ENCODE measurements at regions of chr6 and their contacts with region 1.

Region 1: DNA sequence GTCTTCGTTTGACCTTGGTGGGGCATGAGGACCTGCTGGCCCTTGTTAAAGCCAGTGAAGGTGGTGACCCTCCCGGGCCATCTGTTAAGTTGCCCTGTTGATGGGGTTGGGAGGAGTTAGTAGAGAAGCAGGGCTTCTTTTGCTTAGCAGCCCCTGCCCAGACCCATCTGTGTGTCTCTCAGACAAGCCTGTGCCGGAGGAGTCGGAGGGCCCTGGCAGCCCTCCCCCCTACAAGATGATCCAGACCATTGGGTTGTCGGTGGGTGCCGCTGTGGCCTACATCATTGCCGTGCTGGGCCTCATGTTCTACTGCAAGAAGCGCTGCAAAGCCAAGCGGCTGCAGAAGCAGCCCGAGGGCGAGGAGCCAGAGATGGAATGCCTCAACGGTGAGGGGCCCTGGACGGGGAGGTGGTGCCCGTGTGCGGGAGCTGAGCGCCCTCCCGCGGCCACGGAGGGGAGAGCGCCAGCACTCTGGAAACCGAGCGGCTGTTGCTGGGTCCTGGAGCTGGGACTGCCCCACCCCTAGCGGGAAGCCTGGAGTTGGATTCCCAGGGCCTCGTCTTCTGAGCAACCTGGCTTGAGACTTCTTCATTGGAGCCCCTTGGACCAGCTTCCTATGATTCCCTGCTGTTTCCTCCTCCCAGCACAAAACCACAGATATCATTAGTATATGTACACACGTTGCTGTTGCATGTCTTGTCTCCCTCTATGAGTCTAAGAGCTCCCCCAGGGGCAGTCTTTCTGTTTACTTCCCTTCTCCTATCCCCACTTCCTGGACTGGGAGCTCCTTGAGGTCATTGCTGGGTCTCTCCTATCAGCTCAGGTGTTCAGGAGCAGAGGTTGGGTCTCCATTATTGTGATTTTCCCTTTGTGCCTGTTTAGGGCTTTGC is 27.6 kb upstream of the SRF start:
- DNase-seq: peak; percentile 29 to 93
- H3K4me3 ChIP-seq: no peak overlapping the region
- H3K27ac ChIP-seq: peak overlapping the region in 1 of 2 donors; percentile 9
- H3K4me1 ChIP-seq: peaks cover 0 to 3% of the 10 kb centered on the region in 2 donors
- H3K27me3 ChIP-seq: no peaks in the 10 kb centered on the region
- CTCF ChIP-seq: peak; percentile 94 to 97 (median 95)

Region 2: DNA sequence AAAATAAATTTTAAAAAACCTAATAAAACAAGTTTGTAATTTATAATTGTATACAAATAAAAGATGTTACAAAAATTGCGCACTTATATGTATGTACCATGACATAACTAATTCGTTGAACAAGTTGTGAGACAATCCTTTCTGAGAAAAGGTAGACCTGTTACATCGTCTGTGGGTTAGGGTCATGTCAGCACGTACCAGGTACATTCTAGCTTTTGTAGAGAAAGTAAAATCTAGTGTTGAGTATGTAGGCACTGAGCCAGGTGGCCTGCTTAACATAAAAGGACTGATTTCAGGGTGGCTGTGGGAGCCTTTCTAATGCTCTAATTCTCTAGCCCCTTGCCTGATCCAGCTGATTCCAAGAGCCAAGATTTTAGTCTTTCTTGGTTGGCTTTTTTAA is 253.7 kb before region 1 on chr6:
- intact Hi-C with region 1: no loop called
- DNase-seq: no peak
- H3K4me3 ChIP-seq: peak overlapping the region; percentile 86 to 94
- H3K27ac ChIP-seq: peak overlapping the region; percentile 84 to 91
- H3K4me1 ChIP-seq: peaks cover 0 to 5% of the 10 kb centered on the region in 2 donors
- H3K27me3 ChIP-seq: no peaks in the 10 kb centered on the region
- CTCF ChIP-seq: no peak

Region 3: GRCh38 chr6:42928986-42929820 is 214.3 kb before region 1 on chr6 and contains the start of gene CNPY3:
- intact Hi-C with region 1: no loop called
- DNase-seq: peak; percentile 86 to 97
- H3K4me3 ChIP-seq: peak within 1 kb of the TSS; percentile 69 to 79
- H3K27ac ChIP-seq: peak within 1 kb of the TSS; percentile 81 to 87
- H3K4me1 ChIP-seq: peaks cover 0 to 12% of the 10 kb centered on the region in 2 donors
- H3K27me3 ChIP-seq: no peaks in the 10 kb centered on the region
- CTCF ChIP-seq: no peak
- total RNA-seq, gene CNPY3: 49.6 TPM

Region 4: GRCh38 chr6:42958125-42958524 is 185.4 kb before region 1 on chr6:
- intact Hi-C with region 1: no loop called
- DNase-seq: no peak
- H3K4me3 ChIP-seq: no peak overlapping the region
- H3K27ac ChIP-seq: no peak overlapping the region
- H3K4me1 ChIP-seq: peaks cover 0 to 7% of the 10 kb centered on the region in 2 donors
- H3K27me3 ChIP-seq: no peaks in the 10 kb centered on the region
- CTCF ChIP-seq: no peak

Region 5: DNA sequence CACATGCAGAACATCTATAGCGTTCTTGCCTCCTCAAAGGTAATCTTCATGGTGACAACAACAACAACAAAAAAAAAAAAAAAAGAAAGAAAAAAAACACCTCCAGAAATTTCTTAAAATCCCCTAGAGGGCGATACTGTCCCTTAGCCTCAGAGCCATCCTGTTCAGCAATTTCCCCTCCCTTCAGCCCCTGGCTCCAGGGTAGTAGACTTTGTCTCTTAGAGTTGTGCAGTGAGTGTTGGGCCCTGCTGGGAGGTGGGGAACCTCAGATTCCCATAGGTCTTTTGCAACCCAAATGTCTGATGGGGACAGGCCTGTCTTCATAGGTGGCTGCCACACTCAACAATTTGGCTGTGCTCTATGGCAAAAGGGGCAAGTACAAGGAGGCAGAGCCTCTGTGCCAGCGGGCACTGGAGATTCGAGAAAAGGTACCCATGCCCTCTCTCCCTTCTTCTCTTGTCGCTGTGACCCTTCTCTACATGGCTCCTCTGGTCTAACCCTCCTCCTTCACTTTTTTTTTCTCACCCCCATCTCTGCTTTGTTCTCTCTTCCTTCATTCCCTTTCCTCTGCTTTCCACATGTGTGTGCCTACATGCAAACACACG is 73.3 kb before region 1 on chr6:
- intact Hi-C with region 1: loop called (anchors 1 kb)
- DNase-seq: no peak
- H3K4me3 ChIP-seq: no peak overlapping the region
- H3K27ac ChIP-seq: no peak overlapping the region
- H3K4me1 ChIP-seq: no peaks in the 10 kb centered on the region
- H3K27me3 ChIP-seq: no peaks in the 10 kb centered on the region
- CTCF ChIP-seq: peak in 2 of 3 experiments; percentile 18 to 39

Measured in ascending aorta (tissue), 2 donors.